A549 (cell line): ENCODE measurements at regions of chr2 and their contacts with region 1.

Region 1: DNA sequence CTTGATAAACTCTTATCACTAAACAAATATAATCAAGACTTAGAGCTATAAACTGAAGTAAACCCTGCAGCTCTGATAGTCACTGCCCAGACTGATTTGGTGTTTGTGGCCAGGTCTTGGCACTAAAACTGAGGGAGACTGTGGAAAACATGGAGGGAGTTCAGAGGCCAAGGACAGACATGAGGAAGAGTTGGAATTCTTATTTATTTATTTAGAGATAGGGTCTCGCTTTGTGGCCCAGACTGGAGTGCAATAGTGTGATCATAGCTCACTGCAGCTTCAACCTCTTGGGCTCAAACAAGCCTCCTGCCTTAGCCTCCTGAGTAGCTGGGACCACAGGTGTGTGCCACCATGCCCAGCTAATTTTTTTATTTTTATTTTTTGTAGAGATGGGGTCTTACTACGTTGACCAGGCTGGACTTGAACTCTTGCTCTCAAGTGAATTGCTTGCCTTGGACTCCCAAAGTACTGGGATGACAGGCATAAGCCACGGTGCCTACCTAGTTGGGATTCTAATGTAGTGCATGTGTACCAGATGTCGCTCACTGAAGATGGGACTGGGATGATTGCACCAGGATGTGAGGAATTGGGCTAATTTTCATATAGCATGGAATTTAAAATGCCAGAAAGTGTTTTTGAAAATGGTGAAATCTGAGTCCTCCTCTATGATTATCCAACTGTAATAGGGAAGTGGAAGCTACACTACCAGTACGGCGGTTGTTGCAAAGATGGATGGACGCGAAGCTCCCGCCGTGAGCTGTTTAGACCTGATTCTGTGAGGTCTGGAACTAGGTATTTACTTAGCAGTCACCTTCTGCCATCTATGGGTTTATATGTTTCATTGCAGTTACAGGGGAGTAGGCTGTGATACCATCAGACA is 52.7 kb upstream of the CTLA4 start:
- DNase-seq: peak; percentile 73 to 76
- ATAC-seq: peak; percentile 91 to 95
- H3K4me3 ChIP-seq: no peak overlapping the region
- H3K27ac ChIP-seq: peak overlapping the region; percentile 7 to 41; a peak in 2 of 6 replicates
- H3K4me1 ChIP-seq: peaks cover 30% of the 10 kb centered on the region
- CTCF ChIP-seq: peak; percentile 87
- EP300 ChIP-seq: no peak
- POLR2A ChIP-seq: no peak
- RAD21 ChIP-seq: peak; percentile 89 to 94

Region 2: DNA sequence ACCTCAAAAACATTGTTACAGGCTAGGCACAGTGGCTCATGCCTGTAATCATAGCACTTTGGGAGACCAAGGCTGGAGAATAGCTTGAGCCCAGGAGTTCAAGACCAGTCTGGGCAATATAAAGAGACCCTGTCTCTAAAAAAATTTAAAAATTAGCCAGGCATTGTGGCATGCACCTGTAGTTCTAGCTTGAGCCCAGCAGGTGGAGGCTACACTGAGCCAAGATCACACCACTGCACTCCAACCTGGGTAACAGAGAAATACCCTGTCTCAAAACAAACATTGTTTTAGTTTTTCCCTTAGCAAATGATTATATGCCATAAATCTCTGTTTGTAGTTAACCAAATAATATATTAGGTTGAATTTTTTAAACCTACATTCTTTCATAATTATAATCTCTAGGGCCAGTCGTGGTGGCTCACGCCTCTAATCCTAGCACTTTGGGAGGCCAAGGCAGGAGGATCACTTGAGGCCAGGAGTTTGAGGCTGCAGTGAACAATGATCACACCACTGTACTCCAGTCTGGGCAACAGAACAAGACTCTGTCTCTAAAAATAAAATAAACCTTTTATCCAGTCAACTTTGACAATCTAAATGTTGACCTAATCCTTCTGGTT is 589.4 kb before region 1 on chr2:
- CTCF ChIA-PET with region 1: interaction called, 15 read pairs
- POLR2A ChIA-PET with region 1: no interaction called
- DNase-seq: peak in 1 of 2 experiments; percentile 36
- ATAC-seq: peak in 1 of 2 experiments; percentile 90; a peak in 4 of 6 replicates
- H3K4me3 ChIP-seq: no peak overlapping the region
- H3K27ac ChIP-seq: no peak overlapping the region
- H3K4me1 ChIP-seq: no peaks in the 10 kb centered on the region
- CTCF ChIP-seq: peak; percentile 62
- EP300 ChIP-seq: no peak
- POLR2A ChIP-seq: no peak
- RAD21 ChIP-seq: peak; percentile 56 to 61; a peak in 4 of 5 replicates

Region 3: GRCh38 chr2:203469554-203469953 is 345.3 kb before region 1 on chr2:
- CTCF ChIA-PET with region 1: interaction called, 12 read pairs
- POLR2A ChIA-PET with region 1: no interaction called
- DNase-seq: no peak
- ATAC-seq: no peak
- H3K4me3 ChIP-seq: no peak overlapping the region
- H3K27ac ChIP-seq: no peak overlapping the region
- H3K4me1 ChIP-seq: no peaks in the 10 kb centered on the region
- CTCF ChIP-seq: no peak
- EP300 ChIP-seq: no peak
- POLR2A ChIP-seq: no peak
- RAD21 ChIP-seq: no peak

Region 4: GRCh38 chr2:203650860-203651613 is 163.9 kb before region 1 on chr2:
- CTCF ChIA-PET with region 1: interaction called, 12 read pairs
- POLR2A ChIA-PET with region 1: no interaction called
- DNase-seq: peak; percentile 31 to 71
- ATAC-seq: peak; percentile 86 to 92
- H3K4me3 ChIP-seq: no peak overlapping the region
- H3K27ac ChIP-seq: peak overlapping the region; percentile 68 to 78
- H3K4me1 ChIP-seq: peaks cover 53% of the 10 kb centered on the region
- CTCF ChIP-seq: peak; percentile 76
- EP300 ChIP-seq: no peak
- POLR2A ChIP-seq: no peak
- RAD21 ChIP-seq: peak; percentile 85 to 90

Region 5: DNA sequence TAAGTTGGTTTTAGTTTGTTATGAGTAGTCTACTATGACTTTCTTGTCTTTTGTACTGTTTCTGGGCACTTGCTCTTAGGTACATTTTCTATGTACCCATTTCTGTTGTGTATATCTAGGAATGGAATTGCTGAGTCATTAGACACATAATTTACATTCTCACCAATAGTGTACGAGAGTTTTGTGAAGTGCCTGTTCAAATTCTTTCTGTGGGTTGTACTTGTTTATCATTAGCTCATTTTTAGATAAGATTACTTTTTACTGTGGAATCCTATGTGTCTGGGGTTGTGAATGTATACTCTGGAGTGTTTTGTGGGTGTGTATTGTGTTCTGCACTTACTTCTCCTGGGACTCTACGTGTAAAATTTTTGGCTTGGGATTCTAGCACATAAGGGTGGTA is 145.1 kb before region 1 on chr2:
- CTCF ChIA-PET with region 1: no interaction called
- POLR2A ChIA-PET with region 1: no interaction called
- DNase-seq: no peak
- ATAC-seq: no peak
- H3K4me3 ChIP-seq: no peak overlapping the region
- H3K27ac ChIP-seq: peak overlapping the region in 1 of 2 experiments; percentile 14; a peak in 2 of 6 replicates
- H3K4me1 ChIP-seq: peaks cover 9% of the 10 kb centered on the region; the same call in 1 of the 3 replicates
- CTCF ChIP-seq: no peak
- EP300 ChIP-seq: no peak
- POLR2A ChIP-seq: no peak
- RAD21 ChIP-seq: no peak

Region 6: DNA sequence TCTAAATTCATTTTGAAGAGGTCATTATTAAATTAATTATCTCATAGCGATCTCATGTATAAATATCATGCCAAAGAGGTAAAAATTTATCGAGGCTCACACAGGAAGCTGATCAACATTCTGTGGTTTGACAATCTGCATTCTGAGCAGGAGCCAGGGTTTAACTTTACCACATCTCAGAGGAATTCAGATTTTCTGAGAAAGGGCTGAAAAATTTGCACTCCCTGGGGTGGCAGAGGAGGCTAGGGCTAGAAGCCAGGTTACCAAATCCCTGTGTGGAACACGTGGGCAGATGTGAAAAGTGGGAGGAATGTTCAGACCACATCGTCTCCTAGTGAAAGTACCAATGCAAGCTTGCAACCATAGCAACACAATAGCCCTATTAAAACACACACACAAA is 10.8 kb before region 1 on chr2:
- CTCF ChIA-PET with region 1: interaction called, 10 read pairs
- POLR2A ChIA-PET with region 1: no interaction called
- DNase-seq: no peak
- ATAC-seq: no peak
- H3K4me3 ChIP-seq: no peak overlapping the region
- H3K27ac ChIP-seq: no peak overlapping the region
- H3K4me1 ChIP-seq: no peaks in the 10 kb centered on the region
- CTCF ChIP-seq: no peak
- EP300 ChIP-seq: no peak
- POLR2A ChIP-seq: no peak
- RAD21 ChIP-seq: no peak